Keratinocyte (primary cell): ENCODE measurements at regions of chr3 and their contacts with region 1.

Region 1: GRCh38 chr3:95097492-95097891 is 1034.6 kb downstream of the NSUN3 start:
- DNase-seq: no peak
- H3K4me3 ChIP-seq: no peak overlapping the region
- H3K27ac ChIP-seq: no peak overlapping the region
- H3K4me1 ChIP-seq: no peaks in the 10 kb centered on the region
- H3K27me3 ChIP-seq: no peaks in the 10 kb centered on the region
- CTCF ChIP-seq: no peak

Region 2: GRCh38 chr3:94735354-94735753 is 362.1 kb before region 1 on chr3:
- dilution Hi-C with region 1: no loop called
- DNase-seq: no peak
- H3K4me3 ChIP-seq: no peak overlapping the region
- H3K27ac ChIP-seq: no peak overlapping the region
- H3K4me1 ChIP-seq: no peaks in the 10 kb centered on the region
- H3K27me3 ChIP-seq: no peaks in the 10 kb centered on the region
- CTCF ChIP-seq: no peak

Region 3: GRCh38 chr3:94961446-94962080 is 135.9 kb before region 1 on chr3:
- dilution Hi-C with region 1: loop called (anchors 25 kb)
- DNase-seq: no peak
- H3K4me3 ChIP-seq: no peak overlapping the region
- H3K27ac ChIP-seq: no peak overlapping the region
- H3K4me1 ChIP-seq: no peaks in the 10 kb centered on the region
- H3K27me3 ChIP-seq: no peaks in the 10 kb centered on the region
- CTCF ChIP-seq: no peak